CD8-positive, alpha-beta T cell (primary cell): ENCODE measurements at regions of chr7 and their contacts with region 1.

Region 1: GRCh38 chr7:64832136-64832535 is 37.9 kb downstream of the ZNF138 start:
- DNase-seq: no peak
- ATAC-seq: no peak
- H3K4me3 ChIP-seq: no peak overlapping the region
- H3K4me3 Mint-ChIP-seq: no peak overlapping the region
- H3K27ac ChIP-seq: no peak overlapping the region
- H3K27ac Mint-ChIP-seq: no peak overlapping the region
- H3K4me1 ChIP-seq: no peaks in the 10 kb centered on the region
- H3K4me1 Mint-ChIP-seq: no peaks in the 10 kb centered on the region
- H3K27me3 ChIP-seq: no peaks in the 10 kb centered on the region
- H3K27me3 Mint-ChIP-seq: no peaks in the 10 kb centered on the region
- CTCF ChIP-seq: no peak

Region 2: GRCh38 chr7:64706625-64707292 is 125.4 kb before region 1 on chr7:
- CTCF ChIA-PET with region 1: no interaction called
- POLR2A ChIA-PET with region 1: no interaction called
- intact Hi-C with region 1: loop called in 1 of 2 experiments (anchors 5 kb)
- DNase-seq: no peak
- ATAC-seq: no peak
- H3K4me3 ChIP-seq: peak overlapping the region in 1 of 2 experiments; percentile 22
- H3K4me3 Mint-ChIP-seq: no peak overlapping the region
- H3K27ac ChIP-seq: no peak overlapping the region
- H3K27ac Mint-ChIP-seq: no peak overlapping the region
- H3K4me1 ChIP-seq: no peaks in the 10 kb centered on the region
- H3K4me1 Mint-ChIP-seq: no peaks in the 10 kb centered on the region
- H3K27me3 ChIP-seq: no peaks in the 10 kb centered on the region
- H3K27me3 Mint-ChIP-seq: no peaks in the 10 kb centered on the region
- CTCF ChIP-seq: no peak

Region 3: GRCh38 chr7:64902806-64903721 is 70.9 kb after region 1 on chr7 and contains the start of gene ZNF273:
- CTCF ChIA-PET with region 1: no interaction called
- POLR2A ChIA-PET with region 1: no interaction called
- intact Hi-C with region 1: no loop called
- DNase-seq: peak; percentile 82 to 94 (median 89)
- ATAC-seq: peak; percentile 100
- H3K4me3 ChIP-seq: peak within 1 kb of the TSS; percentile 71 to 98
- H3K4me3 Mint-ChIP-seq: peak within 1 kb of the TSS; percentile 97
- H3K27ac ChIP-seq: peak within 1 kb of the TSS; percentile 53 to 86
- H3K27ac Mint-ChIP-seq: peak within 1 kb of the TSS; percentile 96
- H3K4me1 ChIP-seq: peaks cover 30% of the 10 kb centered on the region
- H3K4me1 Mint-ChIP-seq: peaks cover 48% of the 10 kb centered on the region
- H3K27me3 ChIP-seq: no peaks in the 10 kb centered on the region
- H3K27me3 Mint-ChIP-seq: no peaks in the 10 kb centered on the region
- CTCF ChIP-seq: no peak
- total RNA-seq, gene ZNF273: 8.7 to 9.9 TPM